H1 (cell line): ENCODE measurements at regions of chr11 and their contacts with region 1.

Region 1: DNA sequence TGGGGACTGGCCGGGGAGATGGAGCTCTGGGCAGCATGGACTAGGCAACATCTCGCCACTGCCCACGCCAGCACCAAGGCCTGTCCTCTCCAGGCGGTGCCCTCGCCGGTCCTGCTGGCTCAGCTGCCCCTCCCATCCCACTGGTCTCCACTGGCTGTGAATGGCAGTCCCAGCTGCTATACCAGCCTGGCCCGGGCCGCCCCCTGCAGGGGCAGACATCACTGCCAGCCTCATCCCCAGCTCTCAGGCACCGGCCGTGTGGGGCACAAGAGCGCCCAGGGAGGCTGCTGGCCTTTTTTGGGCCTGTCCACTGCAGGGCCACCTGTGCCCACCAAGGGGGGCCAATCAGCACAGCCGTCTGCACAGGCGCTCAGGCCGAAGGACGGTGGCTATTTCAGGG is 30.1 kb upstream of the H19 start:
- DNase-seq: no peak
- H3K4me3 ChIP-seq: no peak overlapping the region
- H3K27ac ChIP-seq: no peak overlapping the region
- H3K4me1 ChIP-seq: no peaks in the 10 kb centered on the region
- H3K27me3 ChIP-seq: no peaks in the 10 kb centered on the region
- CTCF ChIP-seq: no peak
- EP300 ChIP-seq: no peak
- POLR2A ChIP-seq: no peak
- RAD21 ChIP-seq: no peak

Region 2: DNA sequence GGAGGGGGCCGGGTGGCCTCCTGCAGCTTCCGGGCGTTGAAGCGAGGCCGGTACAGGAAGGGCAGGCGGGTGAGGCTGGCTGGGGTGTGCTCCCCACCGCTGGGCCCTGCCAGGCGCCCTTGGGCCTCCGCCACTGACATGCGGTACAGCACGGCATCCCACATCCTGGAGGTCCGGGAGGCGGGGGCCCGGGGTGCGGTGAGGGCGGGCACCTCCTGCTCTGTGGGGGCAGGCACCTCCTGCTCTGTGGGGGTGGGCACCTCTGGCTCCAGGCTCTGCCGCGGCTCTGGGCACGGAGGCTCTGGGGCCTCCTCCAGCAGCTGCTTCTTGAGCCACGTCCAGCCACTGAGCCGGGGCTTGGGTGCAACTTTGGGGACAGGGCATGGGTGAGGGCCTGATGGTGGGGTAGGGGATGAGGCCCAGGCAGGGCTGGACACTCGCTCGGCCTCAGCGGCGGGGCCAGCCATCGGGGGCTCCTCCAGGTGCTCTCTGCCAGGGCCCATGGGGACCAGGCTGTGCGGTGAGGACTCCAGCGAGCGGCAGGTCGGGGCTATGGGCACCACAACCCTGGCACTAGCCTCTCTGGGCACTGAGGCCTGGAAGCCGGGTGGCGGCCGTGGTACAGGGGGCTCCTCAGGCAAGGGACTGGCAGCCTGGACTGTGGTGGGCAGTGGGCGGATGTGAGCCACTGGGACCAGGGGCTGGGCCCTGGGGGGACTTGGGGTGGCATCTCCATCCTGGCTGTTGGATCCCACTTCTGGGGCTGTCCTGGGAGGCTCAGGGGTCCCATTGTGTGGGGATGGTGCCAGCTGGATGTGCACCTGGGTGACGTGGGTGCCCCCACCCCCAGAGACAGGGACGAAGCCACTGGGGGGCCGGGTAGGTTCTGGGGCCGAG is 138.2 kb before region 1 on chr11:
- CTCF ChIA-PET with region 1: no interaction called
- POLR2A ChIA-PET with region 1: no interaction called
- DNase-seq: no peak
- H3K4me3 ChIP-seq: no peak overlapping the region
- H3K27ac ChIP-seq: no peak overlapping the region
- H3K4me1 ChIP-seq: no peaks in the 10 kb centered on the region
- H3K27me3 ChIP-seq: no peaks in the 10 kb centered on the region
- CTCF ChIP-seq: no peak
- EP300 ChIP-seq: no peak
- POLR2A ChIP-seq: no peak
- RAD21 ChIP-seq: no peak

Region 3: GRCh38 chr11:1970956-1971355 is 56.8 kb before region 1 on chr11:
- CTCF ChIA-PET with region 1: interaction called, 12 read pairs
- POLR2A ChIA-PET with region 1: no interaction called
- DNase-seq: no peak
- H3K4me3 ChIP-seq: no peak overlapping the region
- H3K27ac ChIP-seq: no peak overlapping the region
- H3K4me1 ChIP-seq: no peaks in the 10 kb centered on the region
- H3K27me3 ChIP-seq: no peaks in the 10 kb centered on the region
- CTCF ChIP-seq: no peak
- EP300 ChIP-seq: no peak
- POLR2A ChIP-seq: no peak
- RAD21 ChIP-seq: no peak

Region 4: GRCh38 chr11:2092956-2093412 is 65.3 kb after region 1 on chr11:
- CTCF ChIA-PET with region 1: no interaction called
- POLR2A ChIA-PET with region 1: no interaction called
- DNase-seq: no peak
- H3K4me3 ChIP-seq: no peak overlapping the region
- H3K27ac ChIP-seq: no peak overlapping the region
- H3K4me1 ChIP-seq: peaks cover 0 to 15% (median 12%) of the 10 kb centered on the region in 4 experiments; a peak in 6 of 7 replicates
- H3K27me3 ChIP-seq: 0 out of 7 replicates have a peak, but pooled peaks cover 0 to 3% (median 0%) of the 10 kb centered on the region in 4 experiments
- CTCF ChIP-seq: no peak
- EP300 ChIP-seq: no peak
- POLR2A ChIP-seq: no peak
- RAD21 ChIP-seq: no peak

Region 5: GRCh38 chr11:2157294-2158040 is 129.8 kb after region 1 on chr11:
- CTCF ChIA-PET with region 1: interaction called, 551 read pairs
- POLR2A ChIA-PET with region 1: interaction called, 4 read pairs
- DNase-seq: no peak
- H3K4me3 ChIP-seq: no peak overlapping the region
- H3K27ac ChIP-seq: no peak overlapping the region
- H3K4me1 ChIP-seq: peaks cover 0 to 2% (median 0%) of the 10 kb centered on the region in 4 experiments; a peak in 1 of 7 replicates
- H3K27me3 ChIP-seq: no peaks in the 10 kb centered on the region
- CTCF ChIP-seq: no peak
- EP300 ChIP-seq: no peak
- POLR2A ChIP-seq: no peak
- RAD21 ChIP-seq: no peak